ENCODE measurements at regions of chr21 and their contacts with region 1.

Region 1: GRCh38 chr21:34745557-34746255 is 76.9 kb downstream of the CLIC6 start:
- DNase-seq: peak; percentile 47 to 72
- ATAC-seq: peak; percentile 83 to 96 (median 92)
- H3K4me3 ChIP-seq: peak overlapping the region in 8 of 10 donors; percentile 8 to 47 (median 36)
- H3K27ac ChIP-seq: peak overlapping the region in 5 of 10 donors; percentile 16 to 54 (median 32)
- H3K4me1 ChIP-seq: peaks cover 0 to 12% (median 3%) of the 10 kb centered on the region in 9 donors
- H3K27me3 ChIP-seq: peaks cover 0 to 30% (median 14%) of the 10 kb centered on the region in 7 donors
- CTCF ChIP-seq: peak; percentile 65 to 88 (median 83)

Region 2: GRCh38 chr21:35400233-35400957 is 654.7 kb after region 1 on chr21:
- intact Hi-C with region 1: loop called in 6 of 10 experiments (anchors 2 to 10 kb)
- DNase-seq: peak in 1 of 2 donors; percentile 11
- ATAC-seq: peak in 7 of 8 donors; percentile 23 to 78 (median 67)
- H3K4me3 ChIP-seq: peak overlapping the region in 1 of 10 donors; percentile 18
- H3K27ac ChIP-seq: peak overlapping the region in 1 of 10 donors; percentile 64
- H3K4me1 ChIP-seq: peaks cover 0 to 26% (median 0%) of the 10 kb centered on the region in 9 donors
- H3K27me3 ChIP-seq: peaks cover 0 to 32% (median 19%) of the 10 kb centered on the region in 7 donors
- CTCF ChIP-seq: peak in 8 of 9 donors; percentile 17 to 64 (median 53)

Region 3: DNA sequence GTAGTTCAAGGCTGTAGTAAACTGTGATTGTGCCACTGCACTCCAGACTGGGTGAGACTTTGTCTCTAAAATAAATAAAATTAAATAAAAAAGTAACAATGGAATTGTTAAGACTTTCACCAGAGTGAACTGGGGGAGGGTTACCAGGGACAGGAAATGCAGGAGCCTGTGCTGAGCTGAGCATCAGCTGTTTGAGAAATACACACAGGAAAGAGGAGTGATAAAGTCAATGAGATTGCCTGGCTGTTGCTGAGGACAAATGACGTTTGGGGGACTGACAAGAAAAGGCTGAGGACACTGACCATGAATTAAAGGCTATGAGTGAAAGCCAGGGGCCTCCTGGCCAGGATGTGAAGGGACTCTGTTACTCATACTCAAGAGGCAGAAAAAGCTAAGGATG is 1088.3 kb after region 1 on chr21:
- intact Hi-C with region 1: loop called in 4 of 10 experiments (anchors 5 to 10 kb)
- DNase-seq: no peak
- ATAC-seq: peak in 4 of 8 donors; percentile 33 to 68 (median 58)
- H3K4me3 ChIP-seq: no peak overlapping the region
- H3K27ac ChIP-seq: peak overlapping the region in 2 of 10 donors; percentile 7 to 58
- H3K4me1 ChIP-seq: peaks cover 0 to 5% (median 0%) of the 10 kb centered on the region in 9 donors
- H3K27me3 ChIP-seq: peaks cover 0 to 18% (median 6%) of the 10 kb centered on the region in 7 donors
- CTCF ChIP-seq: no peak

Region 4: DNA sequence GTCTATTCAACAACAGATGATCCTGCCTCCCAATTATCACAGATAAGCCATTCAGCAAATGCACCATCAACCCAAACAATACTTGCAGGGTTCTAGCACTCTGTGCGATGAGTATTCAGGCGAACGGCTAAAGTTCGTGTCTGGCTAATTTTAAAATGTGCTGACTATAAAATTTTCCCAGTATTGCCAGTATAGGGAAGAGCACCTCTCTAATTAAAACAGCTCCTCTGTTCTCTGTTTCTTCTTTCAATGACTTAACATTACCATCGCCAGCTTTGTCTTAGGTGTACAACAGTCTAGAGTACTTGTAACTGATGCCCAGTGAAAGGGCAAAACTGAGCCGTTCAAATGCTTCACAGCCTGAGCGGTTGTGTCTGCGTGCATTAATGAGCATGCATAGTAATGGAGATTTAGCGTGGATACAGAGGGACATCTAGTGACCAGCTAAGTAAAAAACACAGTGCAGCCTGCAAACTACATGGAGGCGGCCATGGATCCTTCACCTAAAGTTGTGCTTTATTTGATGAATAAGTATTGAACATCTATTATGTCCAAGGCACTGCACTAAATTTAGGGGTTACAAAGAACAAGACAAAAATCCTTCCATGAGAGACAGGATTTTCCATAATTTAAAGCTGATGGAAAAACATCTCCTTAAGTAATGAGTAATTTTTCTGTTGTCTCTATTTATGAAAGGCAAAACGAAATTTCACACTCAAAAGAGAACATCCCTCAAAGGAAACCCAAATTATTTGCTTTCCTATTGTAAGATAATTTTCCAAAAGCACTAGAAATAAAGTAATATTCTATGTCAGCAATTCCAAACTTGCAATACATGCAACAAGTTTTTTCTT is 1194.6 kb after region 1 on chr21:
- intact Hi-C with region 1: loop called in 9 of 10 experiments (anchors 1 to 10 kb)
- DNase-seq: peak in 1 of 2 donors; percentile 50
- ATAC-seq: peak; percentile 88 to 99 (median 94)
- H3K4me3 ChIP-seq: peak overlapping the region in 1 of 10 donors; percentile 11
- H3K27ac ChIP-seq: peak overlapping the region in 3 of 10 donors; percentile 3 to 26 (median 26)
- H3K4me1 ChIP-seq: peaks cover 0 to 10% (median 5%) of the 10 kb centered on the region in 9 donors
- H3K27me3 ChIP-seq: peaks cover 0 to 4% (median 0%) of the 10 kb centered on the region in 7 donors
- CTCF ChIP-seq: peak; percentile 23 to 77 (median 67)

Region 5: DNA sequence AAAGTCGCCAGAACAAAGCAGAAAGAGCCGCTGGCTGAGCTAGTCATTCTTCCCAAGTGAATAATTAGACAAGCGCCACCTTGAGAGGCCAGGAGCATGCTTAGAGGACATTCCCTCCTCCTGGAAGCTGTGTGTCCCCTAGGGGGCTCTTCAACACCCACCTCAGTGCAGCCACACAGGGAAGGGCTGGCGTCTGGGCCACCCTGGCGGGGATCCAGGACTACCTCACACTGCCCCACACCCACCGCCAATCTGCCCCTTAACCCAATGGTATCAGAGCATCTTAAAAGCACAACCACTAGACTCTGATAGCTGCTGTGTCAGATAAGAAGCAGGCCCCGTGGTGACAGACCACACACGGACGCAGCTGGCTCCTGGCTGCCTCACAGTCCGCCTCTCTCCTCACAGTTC is 1289.7 kb after region 1 on chr21:
- intact Hi-C with region 1: loop called in 1 of 10 experiments (anchors 5 kb)
- DNase-seq: no peak
- ATAC-seq: peak; percentile 16 to 81 (median 52)
- H3K4me3 ChIP-seq: no peak overlapping the region
- H3K27ac ChIP-seq: no peak overlapping the region
- H3K4me1 ChIP-seq: no peaks in the 10 kb centered on the region
- H3K27me3 ChIP-seq: no peaks in the 10 kb centered on the region
- CTCF ChIP-seq: peak in 2 of 9 donors; percentile 6 to 10

Measured in heart right ventricle (tissue), 16 donors.